ENCODE measurements at regions of chr2 and their contacts with region 1.

Region 1: DNA sequence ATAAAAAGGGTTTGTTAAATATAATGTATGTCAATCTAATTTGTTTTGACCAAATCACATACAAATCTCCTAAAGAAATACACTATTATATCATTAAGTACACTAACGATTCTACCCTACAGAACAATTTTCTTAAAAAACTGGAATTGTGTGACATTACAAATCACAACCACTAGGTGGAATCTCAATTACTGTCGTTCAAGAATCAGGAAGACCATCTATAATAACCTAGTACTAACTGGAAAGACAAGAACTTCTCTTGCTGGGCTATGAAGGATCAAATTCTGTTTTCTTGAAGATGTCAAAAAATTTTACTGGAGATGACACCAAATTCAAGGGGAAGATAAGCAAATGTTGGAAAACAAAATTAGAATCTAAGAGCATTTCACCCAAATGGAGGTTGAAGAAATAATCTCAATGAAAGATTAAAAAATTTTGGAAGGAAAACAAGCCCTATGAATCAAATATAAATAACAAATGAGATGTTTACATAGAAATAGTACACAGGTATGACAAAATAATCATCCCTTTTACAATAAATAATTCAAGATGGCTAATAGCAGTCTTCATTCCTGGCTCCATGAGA is 110.9 kb downstream of the STK39 start:
- DNase-seq: peak in 1 of 2 experiments; percentile 24
- H3K4me3 ChIP-seq: no peak overlapping the region
- H3K4me3 Mint-ChIP-seq: no peak overlapping the region
- H3K27ac Mint-ChIP-seq: no peak overlapping the region
- H3K4me1 ChIP-seq: no peaks in the 10 kb centered on the region
- H3K4me1 Mint-ChIP-seq: no peaks in the 10 kb centered on the region
- H3K27me3 ChIP-seq: no peaks in the 10 kb centered on the region
- H3K27me3 Mint-ChIP-seq: no peaks in the 10 kb centered on the region
- CTCF ChIP-seq: peak; percentile 51 to 52

Region 2: GRCh38 chr2:168060986-168061750 is 75.3 kb before region 1 on chr2:
- CTCF ChIA-PET with region 1: no interaction called
- POLR2A ChIA-PET with region 1: no interaction called
- intact Hi-C with region 1: no loop called
- DNase-seq: no peak
- H3K4me3 ChIP-seq: no peak overlapping the region
- H3K4me3 Mint-ChIP-seq: no peak overlapping the region
- H3K27ac Mint-ChIP-seq: no peak overlapping the region
- H3K4me1 ChIP-seq: 0 out of 2 replicates have a peak, but pooled peaks cover 3% of the 10 kb centered on the region
- H3K4me1 Mint-ChIP-seq: no peaks in the 10 kb centered on the region
- H3K27me3 ChIP-seq: no peaks in the 10 kb centered on the region
- H3K27me3 Mint-ChIP-seq: no peaks in the 10 kb centered on the region
- CTCF ChIP-seq: no peak

Region 3: GRCh38 chr2:168166902-168167510 is 30.5 kb after region 1 on chr2:
- CTCF ChIA-PET with region 1: no interaction called
- POLR2A ChIA-PET with region 1: no interaction called
- intact Hi-C with region 1: no loop called
- DNase-seq: no peak
- H3K4me3 ChIP-seq: no peak overlapping the region
- H3K4me3 Mint-ChIP-seq: no peak overlapping the region
- H3K27ac Mint-ChIP-seq: no peak overlapping the region
- H3K4me1 ChIP-seq: no peaks in the 10 kb centered on the region
- H3K4me1 Mint-ChIP-seq: no peaks in the 10 kb centered on the region
- H3K27me3 ChIP-seq: no peaks in the 10 kb centered on the region
- H3K27me3 Mint-ChIP-seq: peaks cover 3% of the 10 kb centered on the region
- CTCF ChIP-seq: no peak

Region 4: DNA sequence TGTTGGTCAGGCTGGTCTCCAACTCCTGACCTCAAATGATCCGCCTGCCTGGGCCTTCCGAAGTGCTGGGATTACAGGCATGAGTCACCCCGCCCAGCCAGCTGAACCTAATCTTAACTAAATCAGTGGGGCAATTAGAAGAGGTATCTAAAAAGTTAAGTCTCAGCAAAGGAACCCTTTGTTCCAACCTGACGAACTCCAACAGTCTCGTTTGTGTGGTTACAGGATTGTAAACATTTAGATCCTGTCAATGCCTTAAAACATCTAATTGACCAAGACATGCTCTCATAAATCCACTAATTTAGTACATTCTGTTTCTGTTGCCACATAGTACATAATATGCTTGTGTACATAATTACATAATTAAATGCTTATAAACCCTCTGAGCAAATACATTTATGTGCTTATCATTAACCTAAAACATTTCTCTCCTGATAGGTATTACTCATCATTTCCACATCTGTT is 142.0 kb after region 1 on chr2:
- CTCF ChIA-PET with region 1: no interaction called
- POLR2A ChIA-PET with region 1: no interaction called
- intact Hi-C with region 1: loop called (anchors 1 kb)
- DNase-seq: peak; percentile 37 to 50
- H3K4me3 ChIP-seq: no peak overlapping the region
- H3K4me3 Mint-ChIP-seq: no peak overlapping the region
- H3K27ac Mint-ChIP-seq: no peak overlapping the region
- H3K4me1 ChIP-seq: no peaks in the 10 kb centered on the region
- H3K4me1 Mint-ChIP-seq: no peaks in the 10 kb centered on the region
- H3K27me3 ChIP-seq: no peaks in the 10 kb centered on the region
- H3K27me3 Mint-ChIP-seq: peaks cover 2% of the 10 kb centered on the region
- CTCF ChIP-seq: no peak

Region 5: DNA sequence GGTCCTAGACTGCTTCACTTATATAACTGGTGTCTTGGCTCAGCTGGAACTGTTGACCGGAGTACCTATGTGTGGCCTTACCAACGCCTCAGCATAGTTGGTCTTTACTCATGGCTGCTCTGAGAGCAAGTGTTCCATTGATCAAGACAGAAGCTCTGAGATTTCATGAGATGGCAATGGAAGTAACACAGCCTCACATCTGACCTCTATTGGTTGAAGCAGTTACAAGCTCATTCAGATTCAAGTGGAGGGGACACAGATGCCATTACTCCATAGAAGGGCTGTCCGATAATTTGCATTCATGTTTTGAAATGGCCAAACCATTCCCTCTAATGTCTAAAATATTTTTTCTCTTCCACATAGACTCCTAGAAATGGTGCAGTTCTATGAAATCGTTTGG is 157.3 kb after region 1 on chr2:
- CTCF ChIA-PET with region 1: no interaction called
- POLR2A ChIA-PET with region 1: no interaction called
- intact Hi-C with region 1: loop called (anchors 2 kb)
- DNase-seq: no peak
- H3K4me3 ChIP-seq: no peak overlapping the region
- H3K4me3 Mint-ChIP-seq: no peak overlapping the region
- H3K27ac Mint-ChIP-seq: no peak overlapping the region
- H3K4me1 ChIP-seq: peaks cover 3% of the 10 kb centered on the region; the same call in 1 of the 2 replicates
- H3K4me1 Mint-ChIP-seq: no peaks in the 10 kb centered on the region
- H3K27me3 ChIP-seq: no peaks in the 10 kb centered on the region
- H3K27me3 Mint-ChIP-seq: peaks cover 3% of the 10 kb centered on the region
- CTCF ChIP-seq: peak in 1 of 2 experiments; percentile 20

Region 6: GRCh38 chr2:168336864-168337263 is 200.4 kb after region 1 on chr2:
- CTCF ChIA-PET with region 1: interaction called, 5 read pairs
- POLR2A ChIA-PET with region 1: no interaction called
- intact Hi-C with region 1: loop called (anchors 1 kb)
- DNase-seq: peak; percentile 72 to 77
- H3K4me3 ChIP-seq: no peak overlapping the region
- H3K4me3 Mint-ChIP-seq: no peak overlapping the region
- H3K27ac Mint-ChIP-seq: no peak overlapping the region
- H3K4me1 ChIP-seq: no peaks in the 10 kb centered on the region
- H3K4me1 Mint-ChIP-seq: no peaks in the 10 kb centered on the region
- H3K27me3 ChIP-seq: no peaks in the 10 kb centered on the region
- H3K27me3 Mint-ChIP-seq: peaks cover 3% of the 10 kb centered on the region
- CTCF ChIP-seq: peak; percentile 56 to 82